Dorsolateral prefrontal cortex (tissue), 120 donors: ENCODE measurements at regions of chr3 and their contacts with region 1.

Region 1: GRCh38 chr3:56347219-56347871 is 120.9 kb downstream of the ERC2 start:
- DNase-seq: peak in 9 of 10 donors; percentile 45 to 80 (median 74)
- H3K4me3 ChIP-seq: no peak overlapping the region
- H3K27ac ChIP-seq: peak overlapping the region in 16 of 59 donors; percentile 3 to 64 (median 36)
- H3K27me3 ChIP-seq: no peaks in the 10 kb centered on the region
- CTCF ChIP-seq: peak; percentile 38 to 94 (median 77)

Region 2: DNA sequence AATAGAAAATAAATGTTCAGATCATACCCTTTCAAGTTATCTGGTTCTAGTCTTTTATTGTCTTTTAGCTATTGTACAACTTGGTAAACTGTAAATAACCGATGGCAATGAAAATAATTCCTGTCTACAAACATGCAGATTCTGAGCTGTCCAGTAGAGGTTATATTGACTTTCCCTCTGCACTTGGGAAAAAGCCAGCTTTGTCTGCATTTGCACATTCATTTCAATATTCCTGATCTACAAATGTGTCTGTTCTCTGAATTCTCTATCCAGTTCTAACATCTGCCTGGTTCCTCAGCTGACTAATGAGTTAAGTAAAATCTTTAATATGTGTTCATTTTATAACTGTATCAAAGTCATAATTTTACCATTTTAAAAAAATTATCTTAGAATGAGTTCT is 287.6 kb before region 1 on chr3:
- intact Hi-C with region 1: no loop called
- DNase-seq: no peak
- H3K4me3 ChIP-seq: no peak overlapping the region
- H3K27ac ChIP-seq: no peak overlapping the region
- H3K27me3 ChIP-seq: no peaks in the 10 kb centered on the region
- CTCF ChIP-seq: no peak

Region 3: GRCh38 chr3:56366641-56367162 is 19.4 kb after region 1 on chr3:
- intact Hi-C with region 1: loop called in 1 of 2 experiments (anchors 2 kb)
- DNase-seq: no peak
- H3K4me3 ChIP-seq: no peak overlapping the region
- H3K27ac ChIP-seq: peak overlapping the region in 58 of 59 donors; percentile 20 to 90 (median 73)
- H3K27me3 ChIP-seq: no peaks in the 10 kb centered on the region
- CTCF ChIP-seq: no peak

Region 4: GRCh38 chr3:56397798-56398197 is 50.5 kb after region 1 on chr3:
- intact Hi-C with region 1: no loop called
- DNase-seq: no peak
- H3K4me3 ChIP-seq: no peak overlapping the region
- H3K27ac ChIP-seq: no peak overlapping the region
- H3K27me3 ChIP-seq: no peaks in the 10 kb centered on the region
- CTCF ChIP-seq: no peak

Region 5: GRCh38 chr3:56443372-56443771 is 96.0 kb after region 1 on chr3:
- intact Hi-C with region 1: loop called (anchors 1 to 5 kb)
- DNase-seq: no peak
- H3K4me3 ChIP-seq: no peak overlapping the region
- H3K27ac ChIP-seq: no peak overlapping the region
- H3K27me3 ChIP-seq: no peaks in the 10 kb centered on the region
- CTCF ChIP-seq: no peak

Region 6: GRCh38 chr3:56453011-56453410 is 105.7 kb after region 1 on chr3:
- intact Hi-C with region 1: loop called in 1 of 2 experiments (anchors 5 kb)
- DNase-seq: no peak
- H3K4me3 ChIP-seq: no peak overlapping the region
- H3K27ac ChIP-seq: no peak overlapping the region
- H3K27me3 ChIP-seq: peaks cover 0 to 3% (median 0%) of the 10 kb centered on the region in 45 donors
- CTCF ChIP-seq: peak in 1 of 56 donors; percentile 14